Endothelial cell of umbilical vein (primary cell): ENCODE measurements at regions of chr3 and their contacts with region 1.

Region 1: DNA sequence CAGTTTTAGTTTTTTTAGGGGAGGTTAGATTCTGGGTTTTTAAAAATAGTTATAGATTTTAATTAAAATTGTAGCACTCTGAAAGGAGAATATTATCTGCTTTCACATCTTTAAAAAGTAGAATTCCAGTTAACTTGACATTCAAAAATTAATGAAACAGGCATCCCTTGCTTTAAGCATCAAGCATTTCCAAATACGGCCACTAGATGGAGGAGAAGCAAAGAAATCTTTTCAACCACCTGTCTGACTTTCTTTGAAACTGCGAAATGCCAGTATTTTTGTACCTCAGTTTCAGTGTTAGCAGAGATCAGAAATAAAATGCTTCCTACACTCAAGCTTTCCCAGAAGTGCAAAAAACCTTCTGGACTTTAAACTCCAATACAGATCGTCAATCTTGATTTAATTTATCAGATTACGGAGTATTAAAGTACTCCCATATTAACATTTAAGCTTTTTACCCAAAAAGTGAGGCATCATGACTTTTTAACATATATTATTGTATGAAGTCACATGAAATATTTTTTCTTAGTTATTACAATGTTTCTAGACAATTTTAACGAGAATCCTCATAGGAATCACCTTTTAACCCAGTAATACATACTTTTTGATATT is 153.3 kb downstream of the P3H2 start:
- DNase-seq: peak; percentile 71
- H3K4me3 ChIP-seq: no peak overlapping the region
- H3K27ac ChIP-seq: no peak overlapping the region
- H3K4me1 ChIP-seq: no peaks in the 10 kb centered on the region
- H3K27me3 ChIP-seq: no peaks in the 10 kb centered on the region
- CTCF ChIP-seq: peak; percentile 58 to 63
- POLR2A ChIP-seq: no peak

Region 2: GRCh38 chr3:189340672-189341460 is 626.5 kb before region 1 on chr3:
- CTCF ChIA-PET with region 1: no interaction called
- POLR2A ChIA-PET with region 1: no interaction called
- dilution Hi-C with region 1: no loop called
- intact Hi-C with region 1: no loop called
- DNase-seq: no peak
- H3K4me3 ChIP-seq: no peak overlapping the region
- H3K27ac ChIP-seq: no peak overlapping the region
- H3K4me1 ChIP-seq: no peaks in the 10 kb centered on the region
- H3K27me3 ChIP-seq: no peaks in the 10 kb centered on the region
- CTCF ChIP-seq: no peak
- POLR2A ChIP-seq: no peak

Region 3: GRCh38 chr3:190012314-190012782 is 45.0 kb after region 1 on chr3:
- CTCF ChIA-PET with region 1: interaction called, 18 read pairs
- POLR2A ChIA-PET with region 1: interaction called, 4 read pairs
- dilution Hi-C with region 1: no loop called
- intact Hi-C with region 1: loop called (anchors 1 kb)
- DNase-seq: peak; percentile 40
- H3K4me3 ChIP-seq: no peak overlapping the region
- H3K27ac ChIP-seq: peak overlapping the region; percentile 55
- H3K4me1 ChIP-seq: peaks cover 25% of the 10 kb centered on the region
- H3K27me3 ChIP-seq: no peaks in the 10 kb centered on the region
- CTCF ChIP-seq: no peak
- POLR2A ChIP-seq: no peak

Region 4: DNA sequence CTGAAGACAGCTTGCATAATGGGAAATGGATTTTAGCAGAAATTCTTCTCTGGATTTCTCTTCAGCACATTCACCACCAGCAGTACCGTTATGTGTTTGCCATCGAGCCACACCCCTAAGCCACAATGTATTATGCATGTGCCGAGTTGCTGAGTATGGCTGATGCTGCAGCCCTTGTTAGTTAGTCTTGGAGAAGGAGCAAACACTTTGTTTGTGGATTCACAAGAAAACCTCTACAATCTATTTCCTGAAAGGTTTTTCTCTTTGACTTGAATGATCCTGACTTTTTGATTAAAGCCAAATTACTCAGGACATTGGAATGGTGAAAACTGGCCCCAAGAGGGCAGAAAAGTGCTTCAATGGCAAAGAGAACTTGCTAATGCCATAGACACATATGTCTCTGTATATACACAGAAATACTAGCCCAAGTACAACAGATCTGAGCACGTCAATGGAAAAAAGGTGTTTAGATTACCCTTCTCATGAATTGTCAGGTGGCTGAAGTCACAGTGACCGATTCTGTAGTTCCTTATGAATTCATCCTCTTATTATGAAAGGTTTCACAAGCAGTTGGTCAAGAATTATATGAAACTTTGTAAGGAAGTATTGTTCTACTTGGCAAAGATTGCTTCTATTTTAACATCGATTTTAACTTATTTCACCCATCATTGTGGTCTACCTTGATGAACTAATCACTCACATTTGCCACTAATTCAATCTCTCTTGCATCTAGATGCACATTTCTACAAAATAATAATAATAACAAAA is 50.3 kb after region 1 on chr3:
- CTCF ChIA-PET with region 1: interaction called, 18 read pairs
- POLR2A ChIA-PET with region 1: interaction called, 4 read pairs
- dilution Hi-C with region 1: no loop called
- intact Hi-C with region 1: loop called (anchors 1 kb)
- DNase-seq: peak; percentile 84
- H3K4me3 ChIP-seq: no peak overlapping the region
- H3K27ac ChIP-seq: no peak overlapping the region
- H3K4me1 ChIP-seq: peaks cover 3% of the 10 kb centered on the region
- H3K27me3 ChIP-seq: no peaks in the 10 kb centered on the region
- CTCF ChIP-seq: peak; percentile 28 to 47
- POLR2A ChIP-seq: no peak

Region 5: DNA sequence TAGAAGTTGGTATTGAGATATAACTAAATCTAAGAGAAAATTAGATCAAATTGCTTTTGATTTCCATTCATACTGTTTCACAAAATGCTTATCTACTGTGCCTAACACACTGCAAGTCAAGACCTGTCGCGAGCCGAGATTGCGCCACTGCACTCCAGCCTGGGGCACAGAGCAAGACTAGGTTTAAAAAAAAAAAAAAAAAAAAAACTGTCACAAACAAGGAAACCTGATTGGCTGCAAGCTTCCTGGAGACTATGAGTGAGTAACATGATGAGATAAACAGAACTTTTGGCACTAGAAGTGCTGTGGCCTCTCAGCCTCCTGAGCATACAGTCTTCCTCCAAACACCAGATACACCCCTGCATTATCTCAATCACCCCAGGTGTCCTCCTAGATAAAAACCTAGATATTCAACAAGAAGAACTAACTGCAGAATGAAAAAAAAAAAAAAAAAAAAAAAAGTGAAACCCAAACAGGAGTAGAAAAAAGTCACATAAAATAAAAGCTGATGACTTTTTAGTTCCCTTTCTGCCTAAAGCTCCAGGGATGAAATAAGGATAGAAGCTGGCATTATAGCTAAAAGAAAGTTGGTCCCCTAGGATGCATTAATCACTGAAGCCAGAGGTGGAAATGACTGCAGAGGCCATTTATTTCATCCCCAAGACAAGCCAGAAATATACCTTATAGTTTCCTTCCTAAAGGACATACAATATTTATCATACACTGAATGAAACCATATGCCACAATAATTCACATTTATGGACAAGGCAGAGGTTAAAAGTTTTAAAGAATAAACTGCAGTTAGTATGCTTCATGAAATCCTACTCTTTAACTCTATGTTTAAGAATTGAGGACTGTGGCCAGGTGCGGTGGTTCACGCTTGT is 70.9 kb after region 1 on chr3:
- CTCF ChIA-PET with region 1: no interaction called
- POLR2A ChIA-PET with region 1: no interaction called
- dilution Hi-C with region 1: no loop called
- intact Hi-C with region 1: no loop called
- DNase-seq: peak; percentile 47
- H3K4me3 ChIP-seq: no peak overlapping the region
- H3K27ac ChIP-seq: no peak overlapping the region
- H3K4me1 ChIP-seq: no peaks in the 10 kb centered on the region
- H3K27me3 ChIP-seq: no peaks in the 10 kb centered on the region
- CTCF ChIP-seq: no peak
- POLR2A ChIP-seq: no peak

Region 6: GRCh38 chr3:190183121-190183520 is 215.8 kb after region 1 on chr3:
- CTCF ChIA-PET with region 1: no interaction called
- POLR2A ChIA-PET with region 1: no interaction called
- dilution Hi-C with region 1: no loop called
- intact Hi-C with region 1: no loop called
- DNase-seq: peak; percentile 50
- H3K4me3 ChIP-seq: no peak overlapping the region
- H3K27ac ChIP-seq: no peak overlapping the region
- H3K4me1 ChIP-seq: no peaks in the 10 kb centered on the region
- H3K27me3 ChIP-seq: no peaks in the 10 kb centered on the region
- CTCF ChIP-seq: no peak
- POLR2A ChIP-seq: no peak